ENCODE measurements at regions of chr7 and their contacts with region 1.

Region 1: DNA sequence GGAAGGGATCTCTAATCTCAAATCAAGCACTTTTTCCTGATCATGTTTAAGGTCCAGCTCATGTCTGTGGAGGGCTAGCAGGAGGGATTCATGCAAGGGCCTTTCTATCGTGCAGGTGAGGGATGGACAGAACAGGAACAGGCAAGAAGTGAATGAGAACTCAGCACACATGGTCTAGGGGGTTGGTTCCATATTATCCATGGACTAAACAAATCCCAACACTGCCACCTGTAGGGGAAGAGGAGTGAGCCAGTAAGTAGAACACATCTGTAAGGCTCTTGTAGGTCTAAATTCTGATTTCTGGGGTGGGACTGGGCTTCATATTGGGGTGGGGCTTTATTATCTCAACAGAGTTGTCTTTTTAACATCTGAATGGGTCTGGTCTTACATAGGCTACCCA is 138.0 kb upstream of the TARP start:
- DNase-seq: no peak
- H3K4me3 ChIP-seq: no peak overlapping the region
- H3K27ac ChIP-seq: no peak overlapping the region
- H3K4me1 ChIP-seq: no peaks in the 10 kb centered on the region
- H3K27me3 ChIP-seq: no peaks in the 10 kb centered on the region
- CTCF ChIP-seq: no peak
- EP300 ChIP-seq: no peak
- POLR2A ChIP-seq: no peak

Region 2: GRCh38 chr7:38660427-38661099 is 249.2 kb after region 1 on chr7:
- in situ Hi-C with region 1: loop called in 2 of 4 experiments (anchors 25 kb)
- intact Hi-C with region 1: no loop called
- DNase-seq: peak; percentile 18
- H3K4me3 ChIP-seq: no peak overlapping the region
- H3K27ac ChIP-seq: no peak overlapping the region
- H3K4me1 ChIP-seq: no peaks in the 10 kb centered on the region
- H3K27me3 ChIP-seq: no peaks in the 10 kb centered on the region
- CTCF ChIP-seq: peak; percentile 62 to 71 (median 63)
- EP300 ChIP-seq: no peak
- POLR2A ChIP-seq: no peak

Region 3: DNA sequence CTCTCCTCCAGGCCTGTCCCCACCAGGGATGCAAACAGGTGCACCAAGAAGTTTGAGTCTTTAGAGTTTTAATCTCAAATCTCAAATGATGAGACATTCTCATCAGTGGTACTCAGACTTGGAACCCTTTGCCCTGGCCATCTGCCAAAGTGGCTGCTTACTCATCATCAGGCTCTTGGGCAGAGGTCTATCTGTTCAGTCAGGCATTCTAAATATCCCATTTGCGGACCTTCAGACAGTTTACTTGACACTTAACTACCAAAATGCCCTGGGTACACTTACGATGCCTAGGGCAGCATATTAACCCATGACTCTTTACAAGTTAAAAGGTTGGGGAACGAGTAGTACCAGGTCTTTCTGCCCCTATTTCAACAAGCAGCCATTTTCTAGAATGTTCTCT is 1093.6 kb after region 1 on chr7:
- in situ Hi-C with region 1: loop called in 2 of 4 experiments (anchors 25 kb)
- intact Hi-C with region 1: no loop called
- DNase-seq: no peak
- H3K4me3 ChIP-seq: no peak overlapping the region
- H3K27ac ChIP-seq: no peak overlapping the region
- H3K4me1 ChIP-seq: no peaks in the 10 kb centered on the region
- H3K27me3 ChIP-seq: no peaks in the 10 kb centered on the region
- CTCF ChIP-seq: no peak
- EP300 ChIP-seq: no peak
- POLR2A ChIP-seq: no peak

Region 4: GRCh38 chr7:39838326-39838725 is 1426.9 kb after region 1 on chr7:
- in situ Hi-C with region 1: no loop called
- intact Hi-C with region 1: no loop called
- DNase-seq: peak; percentile 26
- H3K4me3 ChIP-seq: no peak overlapping the region
- H3K27ac ChIP-seq: no peak overlapping the region
- H3K4me1 ChIP-seq: peaks cover 0 to 6% (median 3%) of the 10 kb centered on the region in 4 donors
- H3K27me3 ChIP-seq: peaks cover 5% of the 10 kb centered on the region
- CTCF ChIP-seq: no peak
- EP300 ChIP-seq: no peak
- POLR2A ChIP-seq: no peak